Activated T-helper 1 cell treated with anti-CD3 and anti-CD28 coated beads, Interleukin-12 subunit alpha, Interleukin-12 subunit beta, Interleukin-2, Interleukin-4 antibody, amounts not matched to agents 30 ng/mL and 10 ng/mL and 1 ng/mL, durations not matched to agents 14 hours and 24 hours and 36 hours (primary cell): ENCODE measurements at regions of chr4 and their contacts with region 1.

Region 1: GRCh38 chr4:39977489-39978377 is at the start of gene PDS5A:
- DNase-seq: peak; percentile 90
- H3K4me3 Mint-ChIP-seq: peak within 1 kb of the TSS; percentile 95
- H3K27ac Mint-ChIP-seq: peak within 1 kb of the TSS; percentile 94
- H3K4me1 Mint-ChIP-seq: peaks cover 33% of the 10 kb centered on the region
- H3K27me3 Mint-ChIP-seq: no peaks in the 10 kb centered on the region
- total RNA-seq, gene PDS5A: 129 and 131 TPM in 2 replicates

Region 2: GRCh38 chr4:39458505-39459300 is 519.0 kb before region 1 on chr4 and contains the starts of genes LIAS and RPL9:
- intact Hi-C with region 1: loop called (anchors 2 kb)
- DNase-seq: peak; percentile 93
- H3K4me3 Mint-ChIP-seq: peak within 1 kb of the TSS; percentile 99
- H3K27ac Mint-ChIP-seq: peak within 1 kb of the TSS; percentile 99
- H3K4me1 Mint-ChIP-seq: peaks cover 49% of the 10 kb centered on the region
- H3K27me3 Mint-ChIP-seq: no peaks in the 10 kb centered on the region
- total RNA-seq, gene LIAS: 28.6 and 29.7 TPM in 2 replicates
- total RNA-seq, gene RPL9: 1,540 and 1,586 TPM in 2 replicates

Region 3: GRCh38 chr4:39638354-39639240 is 339.1 kb before region 1 on chr4 and contains the start of gene SMIM14:
- intact Hi-C with region 1: loop called (anchors 1 kb)
- DNase-seq: peak; percentile 89
- H3K4me3 Mint-ChIP-seq: peak within 1 kb of the TSS; percentile 87
- H3K27ac Mint-ChIP-seq: peak within 1 kb of the TSS; percentile 83
- H3K4me1 Mint-ChIP-seq: peaks cover 22% of the 10 kb centered on the region
- H3K27me3 Mint-ChIP-seq: peaks cover 24% of the 10 kb centered on the region
- total RNA-seq, gene SMIM14: 0.76 and 1.6 TPM in 2 replicates

Region 4: DNA sequence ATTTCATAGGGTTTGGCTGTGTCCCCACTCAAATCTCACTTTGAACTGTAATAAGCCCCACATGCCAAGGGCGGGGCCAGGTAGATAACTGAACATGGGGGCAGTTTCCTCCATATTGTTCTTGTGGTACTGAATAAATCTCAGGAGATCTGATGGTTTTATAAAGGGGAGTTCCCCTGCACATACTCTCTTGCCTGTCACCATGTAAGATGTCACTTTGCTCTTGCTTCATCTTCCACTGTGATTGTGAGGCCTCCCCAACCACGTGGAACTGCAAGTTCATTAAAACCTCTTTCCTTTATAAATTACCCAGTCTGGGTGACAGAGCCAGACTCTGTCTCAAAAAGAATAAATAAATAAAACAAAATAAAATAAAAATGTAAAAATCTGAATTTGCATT is 95.9 kb before region 1 on chr4:
- intact Hi-C with region 1: loop called (anchors 2 kb)
- DNase-seq: no peak
- H3K4me3 Mint-ChIP-seq: no peak overlapping the region
- H3K27ac Mint-ChIP-seq: no peak overlapping the region
- H3K4me1 Mint-ChIP-seq: peaks cover 5% of the 10 kb centered on the region
- H3K27me3 Mint-ChIP-seq: no peaks in the 10 kb centered on the region

Region 5: DNA sequence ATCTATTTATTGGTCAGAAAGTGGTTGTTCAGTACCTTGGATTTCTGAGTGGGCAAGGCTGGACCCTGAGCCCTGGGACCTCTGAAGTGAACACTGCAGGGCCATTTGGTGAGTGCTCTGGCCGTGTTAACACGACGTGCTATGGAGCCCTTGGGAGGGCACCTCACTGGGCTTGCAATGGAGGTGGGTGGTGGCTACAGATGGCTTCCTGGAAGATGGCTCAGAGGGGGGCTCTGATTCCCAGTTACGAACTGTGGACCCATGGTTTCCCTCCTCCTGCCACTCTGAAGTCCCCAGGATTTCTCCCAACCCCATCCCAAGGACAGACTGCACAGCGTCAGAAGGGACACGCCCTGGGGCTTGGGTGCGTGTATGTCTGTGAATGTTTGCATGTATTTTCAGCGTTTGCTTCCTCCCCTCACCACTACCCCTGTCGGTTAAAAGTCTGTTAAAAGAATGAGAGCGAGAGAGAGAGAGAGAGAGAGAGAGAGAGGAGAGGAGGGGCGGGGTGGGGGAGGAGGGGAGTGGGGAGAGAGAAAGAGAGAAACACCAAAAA is 215.4 kb after region 1 on chr4:
- intact Hi-C with region 1: loop called (anchors 5 kb)
- DNase-seq: no peak
- H3K4me3 Mint-ChIP-seq: peak overlapping the region; percentile 84
- H3K27ac Mint-ChIP-seq: peak overlapping the region; percentile 99
- H3K4me1 Mint-ChIP-seq: peaks cover 79% of the 10 kb centered on the region
- H3K27me3 Mint-ChIP-seq: no peaks in the 10 kb centered on the region